ENCODE measurements at regions of chr10 and their contacts with region 1.

Region 1: DNA sequence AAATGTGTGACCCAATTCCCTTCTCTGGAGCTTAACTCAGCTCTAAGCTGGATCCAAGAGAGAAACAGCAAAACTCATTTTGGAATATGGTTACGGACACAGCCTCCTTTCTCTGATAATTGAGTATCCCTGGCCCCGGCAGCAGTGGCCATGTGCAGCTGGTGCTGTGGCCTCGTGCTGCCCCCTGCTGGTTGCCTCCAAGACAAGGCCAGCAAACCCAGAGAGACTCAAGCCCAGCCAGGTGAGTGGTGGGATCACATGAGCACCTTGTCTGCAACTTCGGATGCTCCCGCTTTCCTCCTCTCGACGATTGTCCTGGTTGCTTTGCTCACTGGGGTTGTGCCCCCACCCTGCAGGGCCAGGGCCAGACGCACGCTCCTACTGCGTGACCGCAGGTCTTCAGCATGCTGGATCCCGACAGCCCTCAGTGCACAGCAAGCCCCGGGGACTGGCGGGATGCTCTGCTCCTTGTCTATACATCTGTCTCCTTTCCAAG is 19.4 kb downstream of the SFTPD start:
- DNase-seq: peak; percentile 63 to 94 (median 82)
- ATAC-seq: peak; percentile 74
- H3K4me3 ChIP-seq: no peak overlapping the region
- H3K27ac ChIP-seq: no peak overlapping the region
- H3K4me1 ChIP-seq: peaks cover 0 to 5% of the 10 kb centered on the region in 2 donors
- H3K27me3 ChIP-seq: peaks cover 0 to 17% of the 10 kb centered on the region in 2 donors
- CTCF ChIP-seq: peak; percentile 91 to 93

Region 2: DNA sequence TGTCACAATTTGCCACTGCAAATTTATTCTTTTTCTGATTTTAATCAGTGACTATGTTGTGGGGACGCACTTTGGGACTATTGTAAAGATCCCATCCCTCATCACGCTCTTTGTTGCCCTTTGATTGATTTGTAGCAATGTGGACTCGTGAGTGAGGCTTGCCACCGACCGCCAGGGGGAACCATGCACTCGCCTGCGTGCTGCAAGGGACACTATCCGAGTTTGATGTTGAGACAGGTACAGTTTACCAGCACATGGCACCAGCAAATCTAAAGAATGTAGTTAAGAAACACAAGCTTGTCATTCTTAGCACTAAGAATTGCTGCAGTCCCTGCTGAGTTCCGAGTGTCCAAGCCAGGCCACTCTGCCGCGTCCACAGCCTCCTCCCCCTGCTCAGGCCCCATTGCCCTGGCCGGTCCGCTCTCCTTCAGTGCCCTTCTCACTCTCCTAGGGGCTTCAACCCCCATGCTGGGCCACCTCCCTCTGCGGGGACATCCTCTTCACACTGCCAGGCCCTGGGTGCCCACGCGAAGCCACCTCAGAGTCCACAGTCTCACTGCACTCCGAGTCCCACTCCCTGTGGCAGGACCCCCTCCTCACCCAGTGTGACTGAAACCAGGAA is 367.2 kb before region 1 on chr10:
- intact Hi-C with region 1: loop called in 1 of 2 experiments (anchors 5 kb)
- DNase-seq: peak; percentile 43 to 89 (median 70)
- ATAC-seq: peak; percentile 72
- H3K4me3 ChIP-seq: no peak overlapping the region
- H3K27ac ChIP-seq: no peak overlapping the region
- H3K4me1 ChIP-seq: no peaks in the 10 kb centered on the region
- H3K27me3 ChIP-seq: no peaks in the 10 kb centered on the region
- CTCF ChIP-seq: peak; percentile 69 to 87

Region 3: DNA sequence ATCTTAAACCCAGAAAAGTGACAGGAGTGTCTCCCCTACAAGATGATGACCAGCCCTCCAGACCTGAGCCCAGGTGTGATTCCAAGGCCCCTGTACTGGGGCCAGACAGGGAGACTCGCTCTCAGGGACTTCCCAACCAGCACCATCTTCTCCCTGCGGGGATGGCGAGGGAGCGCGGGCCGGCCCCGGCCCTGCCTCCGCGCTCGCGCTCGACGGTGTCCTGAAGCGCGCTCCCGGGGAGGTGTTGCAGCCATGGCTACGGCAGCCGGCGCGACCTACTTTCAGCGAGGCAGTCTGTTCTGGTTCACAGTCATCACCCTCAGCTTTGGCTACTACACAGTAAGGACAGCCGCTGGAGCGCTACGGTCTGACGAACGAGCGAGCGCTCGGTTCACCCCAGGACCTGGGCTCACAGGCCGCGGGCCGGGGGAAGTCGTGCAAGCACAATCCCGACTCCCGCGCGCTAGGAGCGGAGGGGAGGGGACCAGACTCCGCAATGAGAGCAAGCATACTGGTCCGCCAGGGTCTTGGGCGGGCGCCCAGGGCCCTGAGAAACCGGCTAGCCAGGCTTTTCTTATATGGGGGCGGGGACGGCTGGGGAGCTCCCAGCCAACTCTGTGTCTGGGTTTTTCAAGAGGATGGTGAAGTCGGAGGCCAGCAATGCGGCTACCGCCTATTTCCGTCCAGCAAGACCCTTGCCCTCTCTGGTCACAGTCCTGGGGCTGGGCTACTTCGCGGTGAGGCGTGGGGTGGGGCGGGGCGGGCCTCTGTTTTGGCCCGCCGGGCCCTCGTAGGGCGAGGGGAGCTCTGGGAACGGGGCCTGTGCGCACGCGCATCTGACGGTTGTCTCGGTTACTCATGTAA is 149.2 kb after region 1 on chr10 and contains the start of gene TMEM254:
- intact Hi-C with region 1: no loop called
- DNase-seq: peak; percentile 93 to 96 (median 95)
- ATAC-seq: peak; percentile 96
- H3K4me3 ChIP-seq: peak within 1 kb of the TSS; percentile 70 to 73
- H3K27ac ChIP-seq: peak within 1 kb of the TSS; percentile 94 to 98
- H3K4me1 ChIP-seq: peaks cover 4 to 17% of the 10 kb centered on the region in 2 donors
- H3K27me3 ChIP-seq: no peaks in the 10 kb centered on the region
- CTCF ChIP-seq: no peak
- polyA plus RNA-seq, gene TMEM254: 41.1 to 45.7 (median 44.7) TPM

Region 4: DNA sequence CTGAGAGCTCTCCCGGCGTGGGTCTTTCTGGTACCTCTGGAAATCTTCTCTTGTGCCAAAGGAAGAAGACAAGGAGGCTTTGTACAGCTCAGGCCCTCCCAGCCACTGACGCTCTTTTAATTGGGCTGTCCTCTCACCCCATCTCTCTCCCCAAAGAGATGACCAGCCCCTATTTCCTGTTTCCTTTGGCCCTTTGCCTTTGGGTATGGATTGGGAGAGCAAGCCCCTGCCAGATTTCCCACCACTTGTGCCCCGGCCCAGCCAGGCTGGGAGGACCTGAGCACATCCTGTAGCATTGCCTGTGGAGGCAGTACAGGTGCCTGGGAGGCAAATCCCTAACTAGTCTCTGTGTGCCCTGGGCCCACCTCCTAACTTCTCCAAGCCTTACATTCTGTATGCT is 197.4 kb after region 1 on chr10:
- intact Hi-C with region 1: no loop called
- DNase-seq: no peak
- ATAC-seq: no peak
- H3K4me3 ChIP-seq: no peak overlapping the region
- H3K27ac ChIP-seq: no peak overlapping the region
- H3K4me1 ChIP-seq: no peaks in the 10 kb centered on the region
- H3K27me3 ChIP-seq: peaks cover 4 to 8% of the 10 kb centered on the region in 2 donors
- CTCF ChIP-seq: no peak

Region 5: GRCh38 chr10:80187465-80188409 is 258.3 kb after region 1 on chr10:
- intact Hi-C with region 1: no loop called
- DNase-seq: peak in 2 of 4 donors; percentile 50 to 80
- ATAC-seq: peak; percentile 37
- H3K4me3 ChIP-seq: no peak overlapping the region
- H3K27ac ChIP-seq: peak overlapping the region; percentile 26 to 80
- H3K4me1 ChIP-seq: peaks cover 17 to 95% of the 10 kb centered on the region in 2 donors
- H3K27me3 ChIP-seq: no peaks in the 10 kb centered on the region
- CTCF ChIP-seq: no peak

Measured in left lung (tissue), 14 donors.